Head of caudate nucleus (tissue), 42 donors: ENCODE measurements at regions of chr1 and their contacts with region 1.

Region 1: GRCh38 chr1:52056163-52056936 is at the start of gene BTF3L4:
- DNase-seq: peak; percentile 92 to 99 (median 98)

Region 2: GRCh38 chr1:52141513-52142219 is 85.3 kb after region 1 on chr1 and contains the start of gene ZFYVE9:
- intact Hi-C with region 1: loop called (anchors 5 kb)
- DNase-seq: peak; percentile 10 to 89 (median 74)

Region 3: DNA sequence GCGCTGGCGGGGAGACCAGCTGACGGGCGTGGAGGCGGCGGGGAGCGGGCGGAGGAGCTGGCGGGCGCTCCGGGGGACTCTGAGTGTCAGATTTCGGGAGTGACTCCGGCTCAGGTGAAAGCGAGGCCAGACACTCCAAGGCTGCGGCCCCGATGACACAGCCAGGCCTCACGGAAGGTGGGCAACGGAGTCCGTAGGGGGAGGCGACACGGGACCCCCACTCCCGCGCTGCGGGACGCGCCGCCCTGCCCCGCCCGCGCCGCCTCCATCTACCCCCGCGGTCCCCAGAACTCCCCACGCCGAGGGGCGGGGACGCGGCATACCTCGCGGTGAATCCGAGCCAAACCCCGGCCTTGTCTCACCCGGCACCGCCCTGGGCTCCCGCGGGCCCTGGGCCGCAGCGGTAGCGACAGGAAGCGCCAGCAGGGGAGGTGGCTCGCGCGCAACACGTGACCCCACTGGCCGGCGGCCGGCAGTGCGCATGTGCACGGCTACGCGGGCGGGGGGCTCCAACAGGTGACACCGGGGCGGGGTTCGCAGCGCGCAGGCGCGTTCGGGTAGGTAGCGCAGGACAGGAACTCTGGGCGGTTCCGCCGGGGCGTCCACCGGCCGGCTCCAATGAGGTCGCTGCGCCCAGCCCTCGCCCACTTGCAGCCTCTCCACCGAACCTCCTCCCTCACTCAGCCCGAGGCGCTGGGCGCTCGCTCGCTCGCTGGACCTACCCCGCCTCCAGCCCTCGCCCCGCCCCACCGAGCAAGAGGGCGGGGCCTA is 309.6 kb after region 1 on chr1 and contains the start of gene CC2D1B:
- intact Hi-C with region 1: loop called (anchors 5 kb)
- DNase-seq: peak; percentile 82 to 97 (median 93)